Upper lobe of right lung (tissue), 1 donor: ENCODE measurements at regions of chr7 and their contacts with region 1.

Region 1: GRCh38 chr7:64183126-64183742 is 23.8 kb upstream of the ZNF735 start:
- DNase-seq: no peak
- ATAC-seq: peak; percentile 63
- H3K4me3 ChIP-seq: no peak overlapping the region
- H3K27ac ChIP-seq: no peak overlapping the region
- H3K4me1 ChIP-seq: no peaks in the 10 kb centered on the region
- H3K27me3 ChIP-seq: peaks cover 17% of the 10 kb centered on the region
- CTCF ChIP-seq: peak; percentile 90

Region 2: DNA sequence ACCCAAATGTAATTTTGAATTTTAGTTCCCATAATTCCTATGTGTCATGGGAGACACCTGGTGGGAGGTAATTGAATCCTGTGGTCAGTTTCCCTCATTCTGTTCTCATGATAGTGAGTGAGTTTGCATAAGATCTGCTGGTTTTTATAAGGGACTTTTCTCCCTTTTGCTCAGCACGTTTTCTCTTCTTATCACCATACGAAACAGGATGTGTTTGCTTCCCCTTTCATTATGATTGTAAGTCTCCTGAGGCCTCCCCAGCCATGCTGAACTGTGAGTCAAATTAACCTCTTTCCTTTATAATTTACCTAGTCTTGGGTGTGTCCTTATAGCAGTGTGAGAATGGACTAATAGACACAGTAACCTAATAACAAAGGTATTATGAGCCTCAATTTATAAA is 94.4 kb after region 1 on chr7:
- intact Hi-C with region 1: no loop called
- DNase-seq: no peak
- ATAC-seq: no peak
- H3K4me3 ChIP-seq: no peak overlapping the region
- H3K27ac ChIP-seq: no peak overlapping the region
- H3K4me1 ChIP-seq: no peaks in the 10 kb centered on the region
- H3K27me3 ChIP-seq: no peaks in the 10 kb centered on the region
- CTCF ChIP-seq: no peak

Region 3: DNA sequence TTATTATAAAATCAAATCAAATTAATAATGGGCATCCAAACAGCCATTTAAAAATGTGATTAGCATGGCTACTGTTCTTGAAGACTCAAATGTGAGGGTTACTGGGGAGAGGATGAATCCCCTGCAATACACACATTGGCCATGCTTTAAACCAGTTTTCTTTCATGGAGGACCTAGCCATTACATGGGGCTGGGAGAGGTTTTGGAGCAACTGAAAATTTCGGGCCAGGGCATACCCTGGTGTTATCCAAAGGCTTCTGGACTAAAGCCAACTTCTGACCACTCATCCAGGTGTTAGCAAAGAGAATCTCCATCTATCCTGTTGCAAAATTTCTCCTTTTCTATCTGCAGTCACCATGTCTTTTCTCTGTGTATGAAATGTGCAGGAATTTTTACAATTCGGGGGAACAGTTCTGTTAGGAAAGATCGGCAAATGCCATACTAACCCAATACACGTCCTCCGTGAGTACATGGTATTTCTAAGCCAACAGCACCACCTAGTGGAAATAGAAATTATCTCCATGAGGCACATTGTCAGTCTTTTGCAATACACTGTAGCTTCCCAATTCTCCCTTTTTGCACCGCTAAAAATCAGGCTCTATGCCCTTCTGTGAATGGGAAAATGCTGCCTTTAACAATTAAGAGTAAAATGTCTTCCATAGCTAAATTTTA is 435.7 kb after region 1 on chr7:
- intact Hi-C with region 1: loop called (anchors 5 kb)
- DNase-seq: no peak
- ATAC-seq: peak; percentile 79
- H3K4me3 ChIP-seq: no peak overlapping the region
- H3K27ac ChIP-seq: no peak overlapping the region
- H3K4me1 ChIP-seq: no peaks in the 10 kb centered on the region
- H3K27me3 ChIP-seq: no peaks in the 10 kb centered on the region
- CTCF ChIP-seq: peak; percentile 66